ENCODE measurements at regions of chr9 and their contacts with region 1.

Region 1: DNA sequence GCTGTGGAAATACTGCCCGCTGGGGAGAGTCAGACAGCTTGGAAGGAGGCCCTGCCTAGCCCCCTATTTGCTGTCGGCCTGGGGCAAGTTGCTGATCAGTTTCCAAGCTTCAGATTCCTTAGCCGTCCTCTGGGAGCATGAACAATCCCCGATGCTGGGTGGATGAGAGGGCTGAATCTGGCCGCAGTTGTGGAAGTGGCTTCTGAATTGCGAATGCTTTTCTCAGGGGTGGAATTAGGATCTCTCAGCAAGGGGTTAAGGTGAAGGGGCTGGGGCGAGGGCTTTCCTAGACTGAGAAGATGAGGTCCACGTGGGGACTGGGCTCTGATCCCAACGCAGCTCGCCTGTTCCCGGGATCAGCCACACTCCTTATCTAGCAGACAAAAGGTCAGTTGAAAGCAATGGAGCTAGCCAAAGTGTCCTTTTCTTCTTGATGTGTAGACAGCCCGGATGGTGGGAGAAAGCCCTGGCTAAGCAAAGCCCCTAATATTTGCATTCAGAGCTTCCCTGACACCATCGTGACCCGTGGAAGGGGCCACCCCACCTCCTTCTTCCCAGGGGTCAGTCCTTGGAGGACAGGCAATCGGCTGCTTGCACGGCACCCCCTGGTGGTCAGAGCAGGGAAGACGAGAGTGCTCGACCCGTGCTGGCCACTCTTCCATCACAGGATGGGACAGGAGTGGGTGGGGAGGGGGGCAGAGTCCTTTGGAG is 54.9 kb downstream of the COL15A1 start:
- DNase-seq: peak; percentile 65 to 96
- H3K4me3 ChIP-seq: no peak overlapping the region
- CTCF ChIP-seq: peak in 1 of 3 donors; percentile 47
- POLR2A ChIP-seq: no peak

Region 2: GRCh38 chr9:98502360-98503325 is 496.0 kb before region 1 on chr9:
- intact Hi-C with region 1: no loop called
- DNase-seq: no peak
- H3K4me3 ChIP-seq: no peak overlapping the region
- CTCF ChIP-seq: no peak
- POLR2A ChIP-seq: no peak

Region 3: DNA sequence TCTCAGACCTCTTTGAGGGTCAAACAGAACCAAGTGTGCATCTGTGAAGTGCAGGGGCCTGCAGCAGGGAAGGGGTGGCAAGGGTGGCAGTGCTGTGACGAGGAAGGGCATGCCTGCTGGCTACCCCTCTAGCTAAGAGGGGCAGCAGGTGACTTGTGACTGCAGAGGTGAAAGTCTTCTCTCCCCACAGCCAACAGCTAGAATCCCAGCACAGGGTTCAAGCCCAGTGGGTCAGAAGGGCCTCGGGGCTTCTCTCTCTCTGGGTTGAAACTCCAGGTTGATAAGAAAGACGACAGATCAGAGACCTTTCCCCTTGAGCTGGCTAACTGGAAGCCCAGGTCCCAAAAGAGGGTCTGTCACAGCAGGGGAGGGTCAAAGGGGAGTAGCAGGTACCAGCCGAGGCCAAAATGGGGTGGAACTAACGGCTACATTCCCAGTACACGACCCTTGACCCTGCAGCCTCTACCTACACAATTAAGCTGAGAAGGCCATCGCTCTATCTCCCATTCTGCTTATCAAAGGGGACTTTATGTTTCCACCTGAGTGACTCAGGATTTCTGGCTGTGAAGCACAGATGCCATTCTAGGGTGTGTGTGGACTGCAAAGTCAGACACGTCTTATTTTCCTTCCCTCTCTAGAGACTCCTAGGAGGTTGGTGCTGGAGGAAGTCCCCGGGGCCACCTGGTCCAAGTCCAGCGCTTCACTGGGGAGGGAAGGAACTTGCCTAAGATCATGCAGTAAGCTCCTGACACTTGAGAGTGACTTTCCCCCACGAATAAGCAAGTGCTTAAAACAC is 216.8 kb before region 1 on chr9:
- intact Hi-C with region 1: no loop called
- DNase-seq: peak in 1 of 2 donors; percentile 71
- H3K4me3 ChIP-seq: no peak overlapping the region
- CTCF ChIP-seq: no peak
- POLR2A ChIP-seq: no peak

Region 4: GRCh38 chr9:98848450-98849149 is 150.0 kb before region 1 on chr9:
- intact Hi-C with region 1: loop called (anchors 5 kb)
- DNase-seq: peak; percentile 87 to 97
- H3K4me3 ChIP-seq: no peak overlapping the region
- CTCF ChIP-seq: peak in 1 of 3 donors; percentile 82
- POLR2A ChIP-seq: no peak

Region 5: DNA sequence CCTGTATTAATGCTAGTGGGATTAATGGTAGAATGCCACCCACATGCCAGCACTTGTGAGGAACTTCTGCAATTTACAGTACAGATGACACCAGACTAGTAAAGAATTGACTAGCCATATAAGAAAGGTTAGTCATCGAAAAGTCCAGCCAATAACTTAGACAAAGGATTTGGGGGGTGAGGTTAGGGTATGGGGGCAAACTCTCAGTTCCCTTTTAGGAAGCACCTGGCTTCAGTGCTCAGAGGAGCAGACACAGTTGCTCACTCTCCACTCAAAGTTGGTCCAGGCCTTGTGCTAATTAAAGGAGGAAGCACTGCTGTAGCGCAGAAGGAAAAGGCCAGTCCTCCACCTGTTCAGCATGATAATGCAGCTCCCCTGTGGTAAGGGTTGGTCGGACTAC is 131.5 kb after region 1 on chr9:
- intact Hi-C with region 1: loop called (anchors 10 kb)
- DNase-seq: no peak
- H3K4me3 ChIP-seq: no peak overlapping the region
- CTCF ChIP-seq: no peak
- POLR2A ChIP-seq: no peak

Measured in lower leg skin (tissue), 4 donors.